Left ventricle myocardium superior (tissue), 1 donor: ENCODE measurements at regions of chr1 and their contacts with region 1.

Region 1: GRCh38 chr1:67149179-67149770 is 14.5 kb upstream of the C1orf141 start:
- DNase-seq: peak; percentile 45
- ATAC-seq: peak; percentile 93

Region 2: GRCh38 chr1:66764994-66765578 is 384.2 kb before region 1 on chr1:
- intact Hi-C with region 1: loop called (anchors 10 kb)
- DNase-seq: no peak
- ATAC-seq: peak; percentile 46

Region 3: GRCh38 chr1:66996018-66996682 is 153.1 kb before region 1 on chr1:
- intact Hi-C with region 1: loop called (anchors 1 kb)
- DNase-seq: peak; percentile 31
- ATAC-seq: peak; percentile 73

Region 4: GRCh38 chr1:67085326-67085725 is 63.9 kb before region 1 on chr1:
- intact Hi-C with region 1: no loop called
- DNase-seq: no peak
- ATAC-seq: no peak